BJ (cell line): ENCODE measurements at regions of chr13 and their contacts with region 1.

Region 1: GRCh38 chr13:110819203-110820014 is 95.5 kb downstream of the ANKRD10 start:
- DNase-seq: peak; percentile 9
- H3K4me3 ChIP-seq: no peak overlapping the region
- H3K27me3 ChIP-seq: peaks cover 1% of the 10 kb centered on the region; the same call in 1 of the 2 replicates
- CTCF ChIP-seq: peak; percentile 92

Region 2: DNA sequence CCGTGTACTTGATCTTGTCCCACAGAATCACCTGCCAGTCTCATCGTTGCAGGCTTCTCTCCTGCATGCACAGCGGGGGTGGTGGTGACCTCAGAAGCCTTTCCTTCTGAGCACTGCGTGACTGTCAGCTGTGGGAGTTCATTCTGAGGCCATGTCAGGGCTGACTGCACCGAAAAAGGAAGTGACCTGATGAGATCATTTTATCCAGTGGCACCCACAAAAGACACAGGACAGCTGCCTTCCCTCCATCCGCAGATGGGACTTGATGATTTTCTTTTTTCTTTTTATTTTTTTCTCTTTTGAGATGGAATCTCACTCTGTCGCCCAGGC is 347.6 kb before region 1 on chr13:
- CTCF ChIA-PET with region 1: no interaction called
- POLR2A ChIA-PET with region 1: no interaction called
- DNase-seq: no peak
- H3K4me3 ChIP-seq: no peak overlapping the region
- H3K27me3 ChIP-seq: no peaks in the 10 kb centered on the region
- CTCF ChIP-seq: no peak

Region 3: DNA sequence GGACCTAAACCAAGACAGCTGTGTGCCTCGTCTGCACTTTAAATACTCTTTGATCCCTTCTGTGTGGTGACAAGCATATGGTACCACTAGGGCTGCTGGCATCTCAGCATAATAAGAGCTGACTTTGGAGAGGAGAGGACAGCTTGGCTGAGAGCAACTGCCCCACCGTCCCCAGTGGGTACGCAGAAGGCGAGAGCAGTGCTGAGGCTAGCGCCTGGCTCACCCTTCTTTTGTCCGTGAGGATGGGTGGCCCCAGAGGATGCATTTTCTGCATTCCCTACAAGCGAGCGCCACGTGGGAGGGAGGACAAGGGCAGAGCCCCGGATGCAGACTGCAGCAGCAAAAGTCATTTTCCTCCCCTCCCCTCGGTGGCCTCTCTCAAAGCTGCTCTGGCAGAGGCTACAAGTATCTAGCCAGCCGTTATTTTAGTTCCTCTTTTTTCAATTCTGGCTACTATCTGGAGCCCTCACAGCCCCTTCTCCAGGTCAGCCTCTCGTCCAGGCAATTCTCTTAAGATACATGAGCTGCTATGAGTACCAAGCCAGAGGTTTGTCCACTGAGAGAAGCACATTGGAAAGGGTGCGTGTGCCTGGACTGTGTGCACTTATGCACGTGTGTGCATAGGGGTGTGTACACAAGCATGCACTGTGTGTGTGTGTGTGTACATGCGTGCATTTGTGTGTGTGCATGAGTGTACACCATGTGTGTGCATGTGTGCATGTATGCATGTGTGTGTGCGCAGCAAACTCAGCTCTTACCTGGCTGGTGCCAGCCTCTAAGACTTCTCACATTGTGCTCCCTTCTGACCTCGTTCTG is 309.2 kb before region 1 on chr13:
- CTCF ChIA-PET with region 1: no interaction called
- POLR2A ChIA-PET with region 1: no interaction called
- DNase-seq: no peak
- H3K4me3 ChIP-seq: no peak overlapping the region
- H3K27me3 ChIP-seq: no peaks in the 10 kb centered on the region
- CTCF ChIP-seq: no peak

Region 4: DNA sequence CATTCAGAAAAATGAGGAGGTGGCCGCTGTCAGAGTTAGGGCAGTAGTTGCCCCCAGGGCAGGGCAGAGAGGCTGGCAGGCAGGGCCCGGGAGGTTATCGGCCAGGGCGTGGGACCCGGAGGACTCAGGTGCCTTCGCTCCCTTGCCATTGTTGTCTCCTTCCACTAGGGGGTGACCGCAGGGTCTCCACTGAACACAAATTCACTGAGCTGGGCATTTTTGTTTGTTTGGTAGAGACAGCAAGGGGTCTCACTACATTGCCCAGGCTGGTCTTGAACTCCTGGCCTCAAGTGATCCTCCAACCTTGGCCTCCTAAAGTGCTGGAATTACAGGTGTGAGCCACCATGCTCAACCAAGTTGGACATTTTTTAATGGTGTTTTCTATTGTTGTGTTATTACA is 138.6 kb before region 1 on chr13:
- CTCF ChIA-PET with region 1: interaction called, 10 read pairs
- POLR2A ChIA-PET with region 1: no interaction called
- DNase-seq: no peak
- H3K4me3 ChIP-seq: no peak overlapping the region
- H3K27me3 ChIP-seq: no peaks in the 10 kb centered on the region
- CTCF ChIP-seq: peak; percentile 45

Region 5: DNA sequence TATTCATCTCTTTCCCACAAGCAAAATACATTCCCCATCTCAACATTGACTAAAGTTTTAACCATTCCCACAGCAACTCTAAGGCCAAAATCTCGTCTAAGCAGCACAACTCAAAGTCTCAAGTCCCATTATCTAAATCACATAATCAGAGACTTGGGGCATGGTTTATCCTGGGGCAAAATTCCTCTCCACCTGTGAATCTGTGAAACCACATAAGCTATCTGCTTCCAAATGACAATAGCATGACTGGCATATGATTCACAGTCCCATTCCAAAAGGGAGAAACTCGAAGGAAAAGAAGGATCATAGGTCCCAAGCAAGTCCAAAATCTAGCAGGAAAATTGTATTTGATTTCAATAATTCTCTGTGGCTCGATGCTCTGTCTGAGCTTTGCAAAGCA is 22.4 kb after region 1 on chr13:
- CTCF ChIA-PET with region 1: no interaction called
- POLR2A ChIA-PET with region 1: no interaction called
- DNase-seq: no peak
- H3K4me3 ChIP-seq: no peak overlapping the region
- H3K27me3 ChIP-seq: peaks cover 6% of the 10 kb centered on the region
- CTCF ChIP-seq: no peak

Region 6: DNA sequence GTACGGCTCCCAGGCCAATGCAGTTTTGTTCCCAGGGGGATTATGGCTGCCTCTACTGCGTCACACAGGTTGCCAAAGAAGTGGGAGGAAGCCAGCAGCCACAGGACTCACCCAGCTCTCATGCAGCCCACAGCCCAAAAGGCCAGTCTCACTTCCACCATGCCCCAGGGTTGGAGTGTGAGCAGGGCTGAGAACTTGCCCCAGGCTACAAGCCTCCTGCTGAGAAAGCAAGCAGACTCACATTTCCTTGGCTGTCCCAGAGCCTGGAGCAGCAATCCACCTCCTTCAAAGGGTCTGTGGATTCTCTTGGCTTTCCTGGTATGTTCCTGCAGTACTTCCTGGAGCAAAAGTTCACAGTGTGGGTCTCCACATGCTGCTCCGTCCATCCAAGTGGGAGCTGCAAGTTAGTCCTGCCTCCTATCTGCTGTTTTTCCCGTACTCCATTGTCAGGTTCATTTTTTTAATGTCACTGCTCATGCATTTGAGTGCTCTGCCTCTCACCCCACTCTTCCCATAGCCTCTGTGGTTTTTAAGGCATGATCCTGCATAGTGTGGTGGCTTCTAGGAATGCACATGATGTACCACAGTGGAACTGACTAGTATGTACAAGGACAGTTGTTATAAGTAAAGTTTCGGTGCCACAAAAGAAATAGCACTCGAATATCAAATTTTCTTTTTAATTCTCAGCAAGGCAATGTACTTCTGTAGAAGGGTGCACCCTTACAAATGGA is 239.5 kb after region 1 on chr13:
- CTCF ChIA-PET with region 1: no interaction called
- POLR2A ChIA-PET with region 1: no interaction called
- DNase-seq: no peak
- H3K4me3 ChIP-seq: no peak overlapping the region
- H3K27me3 ChIP-seq: peaks cover 1% of the 10 kb centered on the region; the same call in 1 of the 2 replicates
- CTCF ChIP-seq: no peak